H1 (cell line): ENCODE measurements at regions of chr11 and their contacts with region 1.

Region 1: DNA sequence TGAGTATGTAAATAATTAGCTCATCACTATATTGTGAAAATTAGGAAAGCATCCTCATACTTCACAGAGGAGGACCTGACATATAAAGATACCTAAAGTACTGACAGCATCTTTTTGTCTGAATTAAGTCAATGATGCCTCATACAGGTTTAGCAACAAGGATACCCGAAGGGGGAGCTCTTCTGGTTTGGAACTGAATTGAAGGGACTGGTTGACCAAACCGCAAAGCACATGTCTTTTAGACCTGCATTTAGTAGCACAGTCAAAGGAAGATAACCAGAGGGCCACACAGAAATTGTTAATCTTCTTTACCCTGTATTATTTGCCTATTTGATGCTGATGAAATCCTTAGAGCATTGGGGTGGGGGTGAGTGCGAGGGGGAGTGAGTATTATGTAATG is 12.9 kb upstream of the WT1 start:
- DNase-seq: no peak
- H3K4me3 ChIP-seq: no peak overlapping the region
- H3K27ac ChIP-seq: no peak overlapping the region
- H3K4me1 ChIP-seq: no peaks in the 10 kb centered on the region
- H3K27me3 ChIP-seq: no peaks in the 10 kb centered on the region; a peak in 2 of 7 replicates
- CTCF ChIP-seq: peak in 2 of 3 experiments; percentile 48 to 67; a peak in 3 of 4 replicates
- EP300 ChIP-seq: no peak
- POLR2A ChIP-seq: no peak
- RAD21 ChIP-seq: peak; percentile 55 to 65

Region 2: DNA sequence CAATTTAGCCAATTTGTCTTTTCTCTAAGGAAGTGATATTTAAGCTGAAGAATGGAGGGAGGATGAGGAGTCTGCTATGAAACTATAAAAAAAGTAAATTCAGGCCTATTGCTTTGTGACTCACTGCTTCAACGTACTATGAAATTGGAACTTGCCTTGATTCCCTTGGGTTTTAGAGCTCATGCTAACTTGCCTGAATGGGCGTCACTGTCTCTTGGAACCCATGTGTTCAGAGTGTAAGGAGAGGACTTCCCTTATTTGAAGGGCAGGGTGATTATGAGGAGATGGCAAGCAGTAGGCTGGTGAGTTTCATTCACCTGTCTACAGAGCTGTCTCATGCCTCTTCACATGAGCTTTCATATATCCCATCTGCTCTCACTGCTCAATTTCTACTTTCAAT is 15.8 kb after region 1 on chr11:
- CTCF ChIA-PET with region 1: interaction called, 12 read pairs
- POLR2A ChIA-PET with region 1: no interaction called
- DNase-seq: no peak
- H3K4me3 ChIP-seq: no peak overlapping the region
- H3K27ac ChIP-seq: no peak overlapping the region
- H3K4me1 ChIP-seq: no peaks in the 10 kb centered on the region
- H3K27me3 ChIP-seq: no peaks in the 10 kb centered on the region
- CTCF ChIP-seq: no peak
- EP300 ChIP-seq: no peak
- POLR2A ChIP-seq: no peak
- RAD21 ChIP-seq: no peak

Region 3: DNA sequence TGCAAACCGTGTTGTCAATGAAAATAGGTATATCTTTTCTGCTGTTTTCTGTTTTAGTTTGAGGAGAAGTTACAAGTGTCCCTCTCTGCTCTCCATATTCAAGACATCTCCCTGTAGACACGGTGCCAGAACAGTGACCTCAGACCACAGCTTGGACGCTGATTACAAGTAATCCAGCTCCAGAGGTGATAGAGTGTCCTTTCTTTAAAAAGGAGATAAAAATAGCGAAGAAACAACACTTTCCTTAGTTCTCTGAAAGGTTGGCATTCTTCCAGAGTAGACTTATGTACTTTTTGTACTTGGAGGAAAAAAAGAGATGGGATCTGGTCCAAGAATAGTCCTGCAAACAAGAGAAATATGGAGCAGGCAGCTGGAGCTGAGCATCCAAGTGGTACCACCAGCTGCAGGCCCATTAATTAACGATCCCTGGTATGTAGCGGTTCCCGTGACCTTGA is 30.1 kb after region 1 on chr11:
- CTCF ChIA-PET with region 1: interaction called, 14 read pairs
- POLR2A ChIA-PET with region 1: no interaction called
- DNase-seq: no peak
- H3K4me3 ChIP-seq: no peak overlapping the region
- H3K27ac ChIP-seq: no peak overlapping the region
- H3K4me1 ChIP-seq: no peaks in the 10 kb centered on the region
- H3K27me3 ChIP-seq: no peaks in the 10 kb centered on the region
- CTCF ChIP-seq: no peak
- EP300 ChIP-seq: no peak
- POLR2A ChIP-seq: no peak
- RAD21 ChIP-seq: no peak